Activated B cell treated with CpG ODN at 0.5 μM for 24 hours (primary cell): ENCODE measurements at regions of chr13 and their contacts with region 1.

Region 1: GRCh38 chr13:77429320-77430142 is 102.6 kb upstream of the MYCBP2 start:
- DNase-seq: peak; percentile 22
- ATAC-seq: peak; percentile 91
- H3K4me3 Mint-ChIP-seq: peak overlapping the region; percentile 75
- H3K27ac Mint-ChIP-seq: peak overlapping the region; percentile 99
- H3K4me1 Mint-ChIP-seq: peaks cover 44% of the 10 kb centered on the region
- H3K27me3 Mint-ChIP-seq: no peaks in the 10 kb centered on the region
- CTCF ChIP-seq: no peak

Region 2: DNA sequence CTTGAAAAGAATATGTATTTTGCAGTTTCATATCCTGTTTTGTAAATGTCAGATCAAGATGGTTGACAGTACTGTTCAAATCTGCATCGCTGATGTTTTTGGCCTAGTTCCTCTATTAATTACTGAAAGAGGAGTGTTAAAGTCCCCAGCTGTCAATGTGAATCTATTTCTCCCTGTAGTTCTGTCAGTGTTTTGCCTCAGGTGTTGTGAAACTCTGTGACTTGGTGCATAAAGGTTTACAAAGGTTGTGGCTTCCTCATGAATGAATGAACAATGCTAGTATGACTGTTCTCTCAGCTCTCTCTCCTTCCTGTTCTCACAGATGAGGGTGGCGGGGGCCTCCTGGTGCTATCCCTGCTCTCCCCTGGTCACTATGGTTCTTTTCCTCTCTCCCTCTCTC is 245.1 kb before region 1 on chr13:
- CTCF ChIA-PET with region 1: no interaction called
- POLR2A ChIA-PET with region 1: no interaction called
- intact Hi-C with region 1: loop called (anchors 1 kb)
- DNase-seq: peak; percentile 23
- ATAC-seq: peak; percentile 97
- H3K4me3 Mint-ChIP-seq: peak overlapping the region; percentile 61
- H3K27ac Mint-ChIP-seq: peak overlapping the region; percentile 95
- H3K4me1 Mint-ChIP-seq: peaks cover 28% of the 10 kb centered on the region
- H3K27me3 Mint-ChIP-seq: no peaks in the 10 kb centered on the region
- CTCF ChIP-seq: no peak

Region 3: DNA sequence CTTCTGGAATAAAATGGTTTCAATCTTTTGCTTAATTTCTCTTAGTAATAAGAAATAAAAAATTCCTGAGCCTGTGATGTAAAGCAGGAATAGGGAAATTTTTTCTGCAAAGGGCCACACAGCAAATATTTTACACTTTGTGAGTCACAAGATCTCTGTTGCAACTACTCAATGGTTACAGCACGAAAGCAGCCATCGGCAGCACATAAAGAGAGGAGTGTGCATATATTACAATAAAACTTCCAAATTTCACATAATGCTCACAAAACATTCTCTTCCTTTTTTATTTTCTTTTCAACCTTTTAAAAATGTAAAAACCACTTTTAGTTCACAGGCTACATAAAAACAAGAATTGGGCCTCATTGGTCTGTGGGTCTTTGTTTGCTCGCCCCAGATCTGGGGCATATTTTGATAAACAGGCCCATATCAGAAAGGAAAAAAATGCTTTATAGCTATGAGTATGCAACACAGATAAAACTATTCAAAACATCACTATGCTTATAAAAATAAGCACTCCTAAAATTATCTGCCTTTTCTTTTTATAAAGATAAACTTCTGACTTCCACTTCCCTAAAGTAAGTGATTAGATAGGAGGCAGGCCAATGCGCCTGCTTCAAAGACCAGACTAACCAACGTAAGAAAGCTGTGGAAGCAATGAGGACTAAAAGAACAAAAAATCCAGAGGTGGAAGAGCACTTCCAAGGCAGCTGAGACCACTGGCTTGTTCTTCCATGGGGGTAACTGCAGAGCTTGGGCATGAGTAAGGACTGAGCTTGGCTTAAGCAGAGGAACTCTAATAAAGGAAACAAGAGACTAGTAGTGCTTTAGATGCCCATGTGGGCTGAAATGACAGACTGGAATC is 129.1 kb before region 1 on chr13:
- CTCF ChIA-PET with region 1: no interaction called
- POLR2A ChIA-PET with region 1: no interaction called
- intact Hi-C with region 1: loop called (anchors 2 kb)
- DNase-seq: no peak
- ATAC-seq: peak; percentile 46
- H3K4me3 Mint-ChIP-seq: peak overlapping the region; percentile 57
- H3K27ac Mint-ChIP-seq: peak overlapping the region; percentile 87
- H3K4me1 Mint-ChIP-seq: peaks cover 84% of the 10 kb centered on the region
- H3K27me3 Mint-ChIP-seq: no peaks in the 10 kb centered on the region
- CTCF ChIP-seq: no peak

Region 4: GRCh38 chr13:77345150-77345780 is 84.3 kb before region 1 on chr13:
- CTCF ChIA-PET with region 1: no interaction called
- POLR2A ChIA-PET with region 1: interaction called, 18 read pairs
- intact Hi-C with region 1: loop called (anchors 1 kb)
- DNase-seq: no peak
- ATAC-seq: peak; percentile 77
- H3K4me3 Mint-ChIP-seq: peak overlapping the region; percentile 21
- H3K27ac Mint-ChIP-seq: peak overlapping the region; percentile 86
- H3K4me1 Mint-ChIP-seq: peaks cover 55% of the 10 kb centered on the region
- H3K27me3 Mint-ChIP-seq: no peaks in the 10 kb centered on the region
- CTCF ChIP-seq: no peak

Region 5: DNA sequence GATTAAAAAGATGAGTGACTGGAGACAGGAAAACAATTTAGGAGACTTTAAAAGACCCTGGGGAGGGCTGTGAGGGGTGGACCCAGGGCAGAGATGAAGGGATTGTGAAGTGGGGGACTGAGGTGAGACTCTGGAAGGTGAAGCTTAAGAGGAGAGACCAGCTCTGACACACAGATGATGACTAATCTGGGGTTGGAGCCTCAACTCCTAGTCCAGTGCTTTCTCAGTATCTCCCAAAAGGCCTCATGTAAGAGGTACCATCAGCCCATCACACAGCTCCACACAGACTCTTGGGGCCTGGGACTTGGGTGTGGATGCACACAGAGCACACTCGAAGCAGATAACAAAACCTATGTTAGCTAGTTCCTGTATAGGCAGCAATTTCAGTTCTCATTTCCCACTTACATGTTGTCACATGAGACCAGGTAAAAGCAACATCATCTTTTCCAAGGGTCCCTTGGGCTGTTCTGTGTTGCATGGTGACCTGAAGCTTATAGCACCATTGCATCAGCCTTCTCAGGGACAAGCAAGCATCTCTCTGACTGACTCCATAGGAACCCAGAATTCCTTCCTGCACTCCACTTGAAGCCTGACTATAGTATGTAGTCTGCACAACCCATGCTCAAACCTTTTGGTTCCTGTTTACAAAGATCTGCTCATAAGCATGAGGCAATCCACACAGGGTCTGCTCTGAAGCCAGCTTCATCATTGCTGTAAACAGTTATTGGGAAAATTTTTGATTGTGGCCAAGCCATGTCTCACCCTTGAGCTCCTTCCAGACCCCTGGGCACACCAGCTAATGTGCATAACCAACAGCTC is 14.1 kb before region 1 on chr13:
- CTCF ChIA-PET with region 1: no interaction called
- POLR2A ChIA-PET with region 1: interaction called, 32 read pairs
- intact Hi-C with region 1: loop called (anchors 1 kb)
- DNase-seq: no peak
- ATAC-seq: peak; percentile 86
- H3K4me3 Mint-ChIP-seq: peak overlapping the region; percentile 11
- H3K27ac Mint-ChIP-seq: peak overlapping the region; percentile 89
- H3K4me1 Mint-ChIP-seq: peaks cover 35% of the 10 kb centered on the region
- H3K27me3 Mint-ChIP-seq: no peaks in the 10 kb centered on the region
- CTCF ChIP-seq: no peak